Ascending aorta (tissue), 2 donors: ENCODE measurements at regions of chr6 and their contacts with region 1.

Region 1: GRCh38 chr6:33161354-33162331 is 30.6 kb downstream of the COL11A2 start:
- DNase-seq: peak; percentile 38 to 90
- H3K4me3 ChIP-seq: peak overlapping the region; percentile 58 to 61
- H3K27ac ChIP-seq: peak overlapping the region; percentile 47 to 58
- H3K4me1 ChIP-seq: peaks cover 4% of the 10 kb centered on the region in 2 donors
- H3K27me3 ChIP-seq: no peaks in the 10 kb centered on the region
- CTCF ChIP-seq: peak; percentile 89 to 97 (median 92)

Region 2: DNA sequence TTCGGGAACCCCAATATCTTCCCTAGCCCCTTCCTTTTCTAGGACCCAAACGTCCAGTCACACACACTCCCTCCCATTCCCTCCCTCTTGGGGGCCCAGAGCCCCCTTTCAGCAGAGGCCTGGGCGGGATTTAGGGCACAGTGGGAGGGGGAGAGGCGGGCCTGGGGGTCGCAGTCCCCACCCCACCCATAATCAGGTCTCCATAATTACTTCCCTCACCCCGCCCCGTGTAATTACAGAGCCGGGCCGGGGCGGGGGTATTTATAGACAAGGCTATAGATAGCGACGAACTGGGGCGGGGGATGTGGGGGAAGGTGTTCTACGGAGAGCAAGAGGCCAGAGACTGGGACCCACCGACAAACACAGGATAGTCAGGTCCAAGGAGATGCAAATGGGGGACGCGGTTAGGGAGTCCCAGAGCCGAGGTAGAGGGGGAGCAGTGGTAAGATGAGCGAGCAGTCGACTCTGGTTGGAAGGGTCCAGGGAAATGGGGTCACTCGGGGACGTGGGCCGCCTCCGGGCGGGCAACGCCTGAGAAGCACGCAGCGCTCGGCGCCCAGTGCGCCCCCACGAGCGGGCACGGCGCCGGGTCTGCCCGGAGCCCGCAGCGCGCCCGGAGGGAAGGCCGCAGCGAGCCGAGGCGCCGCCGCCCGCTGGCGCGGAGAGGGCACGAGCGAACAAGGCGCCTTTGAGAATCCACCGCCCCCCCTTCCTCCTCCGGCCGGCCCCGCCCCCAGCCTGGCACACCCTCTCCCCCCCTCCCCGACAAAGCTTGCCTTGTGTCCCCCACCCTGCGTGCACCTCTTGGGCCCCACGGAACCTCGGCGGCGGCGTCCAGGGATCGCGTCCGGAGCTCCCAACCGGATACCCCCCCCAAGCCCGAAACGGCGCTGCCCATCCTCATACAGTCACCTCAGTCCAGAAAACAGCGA is 31.3 kb after region 1 on chr6:
- intact Hi-C with region 1: loop called (anchors 2 kb)
- DNase-seq: no peak
- H3K4me3 ChIP-seq: peak overlapping the region; percentile 50 to 65
- H3K27ac ChIP-seq: peak overlapping the region; percentile 15 to 71
- H3K4me1 ChIP-seq: peaks cover 11% of the 10 kb centered on the region in 2 donors
- H3K27me3 ChIP-seq: peaks cover 4% of the 10 kb centered on the region
- CTCF ChIP-seq: no peak